ENCODE measurements at regions of chr15 and their contacts with region 1.

Region 1: GRCh38 chr15:45618813-45619212 is 16.0 kb upstream of the SQOR start:
- DNase-seq: no peak
- ATAC-seq: no peak

Region 2: DNA sequence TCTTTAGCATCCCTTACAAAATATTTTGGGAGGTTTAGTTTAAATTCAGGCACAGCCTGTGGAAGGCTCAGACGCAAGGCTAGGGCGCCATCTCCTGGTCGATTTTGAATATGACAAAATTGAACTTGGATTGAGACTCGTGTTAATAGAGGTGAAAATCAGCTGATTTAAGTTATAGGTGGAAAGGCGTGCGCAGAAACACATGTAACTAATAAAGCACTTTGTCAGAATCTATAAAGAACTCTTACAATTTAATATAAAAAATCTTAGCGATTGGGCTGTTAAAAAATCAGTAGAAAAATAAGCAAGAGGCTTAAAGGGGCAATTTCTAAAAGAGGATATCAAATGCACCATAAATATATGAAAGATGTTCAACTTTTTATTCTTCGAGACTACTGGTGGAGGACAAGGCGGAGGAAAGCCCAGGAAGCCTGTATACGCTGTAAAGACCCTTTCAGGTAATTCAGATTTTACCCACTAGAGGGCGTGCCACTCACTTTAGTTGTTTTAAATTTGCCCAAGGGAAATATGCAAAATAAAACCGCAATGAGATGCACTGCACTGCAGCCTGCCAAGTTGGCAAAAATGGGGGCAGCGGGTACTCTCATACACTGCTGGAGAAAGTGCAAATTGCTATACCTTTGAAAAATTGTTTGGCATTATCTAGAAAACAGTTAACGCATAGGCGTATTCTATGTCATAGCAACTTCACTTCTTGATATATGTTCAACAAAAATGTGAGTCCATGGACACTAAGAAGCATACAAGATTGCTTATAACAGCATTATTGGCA is 161.0 kb before region 1 on chr15:
- intact Hi-C with region 1: loop called (anchors 5 kb)
- DNase-seq: peak; percentile 57
- ATAC-seq: peak; percentile 91

Region 3: GRCh38 chr15:45802140-45802539 is 183.3 kb after region 1 on chr15:
- intact Hi-C with region 1: no loop called
- DNase-seq: no peak
- ATAC-seq: no peak

Measured in Right ventricle myocardium superior (tissue), 1 donor.